ENCODE measurements at regions of chr1 and their contacts with region 1.

Region 1: GRCh38 chr1:44594871-44595746 is 79.2 kb downstream of the TMEM53 start:
- DNase-seq: peak; percentile 57
- H3K4me3 Mint-ChIP-seq: no peak overlapping the region
- H3K27ac Mint-ChIP-seq: no peak overlapping the region
- H3K4me1 Mint-ChIP-seq: no peaks in the 10 kb centered on the region
- H3K27me3 Mint-ChIP-seq: peaks cover 5% of the 10 kb centered on the region

Region 2: GRCh38 chr1:44021581-44022321 is 573.4 kb before region 1 on chr1:
- intact Hi-C with region 1: no loop called
- DNase-seq: no peak
- H3K4me3 Mint-ChIP-seq: no peak overlapping the region
- H3K27ac Mint-ChIP-seq: no peak overlapping the region
- H3K4me1 Mint-ChIP-seq: no peaks in the 10 kb centered on the region
- H3K27me3 Mint-ChIP-seq: no peaks in the 10 kb centered on the region

Region 3: DNA sequence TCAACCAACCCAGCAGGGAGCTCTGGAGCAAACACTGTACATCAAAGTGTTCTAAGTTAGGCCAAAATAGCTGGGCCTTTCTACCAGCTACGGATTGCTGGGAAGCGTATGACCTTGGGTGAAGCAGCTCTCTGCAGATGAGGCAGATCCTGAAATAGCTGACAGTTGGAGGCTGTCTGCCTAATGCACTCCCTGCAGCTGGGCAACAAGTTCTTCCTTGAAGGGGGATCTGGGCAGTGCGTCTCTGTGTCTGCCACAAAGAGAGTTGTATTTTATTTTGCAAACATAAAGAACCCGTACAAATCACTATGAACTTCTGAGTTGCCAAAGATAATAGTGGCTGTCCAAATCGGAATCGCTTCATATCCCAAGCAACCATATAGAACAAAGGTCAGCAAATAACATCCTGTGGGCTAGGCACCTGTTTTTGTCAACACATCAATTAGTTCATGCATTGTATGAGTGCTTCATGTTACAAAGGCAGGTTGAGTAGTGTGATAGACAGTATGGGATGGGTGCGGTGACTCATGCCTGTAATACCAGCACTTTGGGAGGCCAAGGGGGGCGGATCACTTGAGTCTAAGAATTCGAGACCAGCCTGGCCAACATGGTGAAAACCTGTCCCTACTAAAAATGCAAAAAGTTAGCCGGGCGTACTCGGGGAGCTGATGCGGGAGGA is 505.6 kb before region 1 on chr1:
- intact Hi-C with region 1: loop called (anchors 5 kb)
- DNase-seq: no peak
- H3K4me3 Mint-ChIP-seq: no peak overlapping the region
- H3K27ac Mint-ChIP-seq: no peak overlapping the region
- H3K4me1 Mint-ChIP-seq: no peaks in the 10 kb centered on the region
- H3K27me3 Mint-ChIP-seq: peaks cover 23% of the 10 kb centered on the region

Region 4: GRCh38 chr1:44294588-44295007 is 300.5 kb before region 1 on chr1:
- intact Hi-C with region 1: no loop called
- DNase-seq: no peak
- H3K4me3 Mint-ChIP-seq: no peak overlapping the region
- H3K27ac Mint-ChIP-seq: no peak overlapping the region
- H3K4me1 Mint-ChIP-seq: no peaks in the 10 kb centered on the region
- H3K27me3 Mint-ChIP-seq: no peaks in the 10 kb centered on the region

Region 5: DNA sequence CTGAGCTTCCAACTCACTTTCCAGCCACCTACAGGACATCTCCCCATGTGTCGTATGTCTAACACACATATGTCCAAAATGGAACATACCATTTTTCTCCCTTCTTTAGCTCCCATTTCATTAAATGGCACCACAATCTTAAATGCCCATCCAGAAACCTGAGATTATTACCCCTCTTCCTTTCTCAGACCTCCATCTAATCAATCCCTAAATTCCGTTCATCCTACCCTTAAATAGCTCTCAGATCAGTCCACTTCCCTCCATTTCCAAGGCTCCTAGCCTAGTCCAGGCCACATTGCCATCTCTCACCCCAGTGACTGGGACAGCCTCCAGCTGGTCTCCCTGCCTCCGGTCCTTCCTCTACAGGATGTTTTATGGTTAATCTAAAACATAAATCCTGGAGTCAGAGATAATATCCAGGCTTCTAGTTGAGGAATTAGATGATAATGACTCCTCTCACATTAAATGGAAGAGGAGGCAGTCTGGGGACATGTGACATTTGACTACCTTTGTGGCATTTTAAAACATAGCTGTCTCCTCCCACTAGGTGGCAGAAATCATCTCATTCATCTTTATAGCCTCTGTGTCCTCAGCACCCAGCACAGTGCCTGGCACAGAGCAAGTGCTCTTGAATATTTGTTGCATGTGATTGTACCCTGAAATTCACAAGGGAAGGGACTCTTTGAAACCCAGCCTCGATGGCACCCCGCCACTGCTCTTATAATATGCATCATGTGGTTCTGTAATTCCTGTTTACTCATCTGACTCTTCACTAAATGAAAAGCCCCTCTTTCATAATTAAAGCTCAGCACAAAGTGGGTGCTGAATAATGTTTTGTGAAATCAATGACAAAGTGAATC is 23.2 kb before region 1 on chr1:
- intact Hi-C with region 1: loop called (anchors 1 kb)
- DNase-seq: no peak
- H3K4me3 Mint-ChIP-seq: no peak overlapping the region
- H3K27ac Mint-ChIP-seq: no peak overlapping the region
- H3K4me1 Mint-ChIP-seq: no peaks in the 10 kb centered on the region
- H3K27me3 Mint-ChIP-seq: peaks cover 10% of the 10 kb centered on the region